ENCODE measurements at regions of chr12 and their contacts with region 1.

Region 1: GRCh38 chr12:116142936-116143898 is 134.3 kb downstream of the MED13L start:
- DNase-seq: no peak
- ATAC-seq: peak; percentile 63
- H3K4me3 ChIP-seq: no peak overlapping the region
- H3K4me3 Mint-ChIP-seq: peak overlapping the region in 7 of 10 donors; percentile 15 to 72 (median 51)
- H3K27ac ChIP-seq: no peak overlapping the region
- H3K27ac Mint-ChIP-seq: peak overlapping the region in 5 of 9 donors; percentile 1 to 45 (median 7)
- H3K4me1 ChIP-seq: peaks cover 11 to 21% of the 10 kb centered on the region in 2 donors
- H3K4me1 Mint-ChIP-seq: peaks cover 42 to 61% (median 52%) of the 10 kb centered on the region in 7 donors
- H3K27me3 ChIP-seq: no peaks in the 10 kb centered on the region
- H3K27me3 Mint-ChIP-seq: no peaks in the 10 kb centered on the region

Region 2: GRCh38 chr12:116066381-116067230 is 76.6 kb before region 1 on chr12:
- CTCF ChIA-PET with region 1: no interaction called
- POLR2A ChIA-PET with region 1: no interaction called
- intact Hi-C with region 1: loop called in 1 of 2 experiments (anchors 5 kb)
- DNase-seq: peak; percentile 18 to 58 (median 49)
- ATAC-seq: peak; percentile 87
- H3K4me3 ChIP-seq: no peak overlapping the region
- H3K4me3 Mint-ChIP-seq: peak overlapping the region in 1 of 10 donors; percentile 14
- H3K27ac ChIP-seq: no peak overlapping the region
- H3K27ac Mint-ChIP-seq: peak overlapping the region in 4 of 9 donors; percentile 3 to 80 (median 10)
- H3K4me1 ChIP-seq: no peaks in the 10 kb centered on the region
- H3K4me1 Mint-ChIP-seq: peaks cover 22 to 72% (median 55%) of the 10 kb centered on the region in 7 donors
- H3K27me3 ChIP-seq: no peaks in the 10 kb centered on the region
- H3K27me3 Mint-ChIP-seq: no peaks in the 10 kb centered on the region

Region 3: GRCh38 chr12:116116650-116117424 is 26.4 kb before region 1 on chr12:
- CTCF ChIA-PET with region 1: no interaction called
- POLR2A ChIA-PET with region 1: no interaction called
- intact Hi-C with region 1: no loop called
- DNase-seq: no peak
- ATAC-seq: no peak
- H3K4me3 ChIP-seq: no peak overlapping the region
- H3K4me3 Mint-ChIP-seq: no peak overlapping the region
- H3K27ac ChIP-seq: no peak overlapping the region
- H3K27ac Mint-ChIP-seq: no peak overlapping the region
- H3K4me1 ChIP-seq: peaks cover 0 to 15% of the 10 kb centered on the region in 2 donors
- H3K4me1 Mint-ChIP-seq: peaks cover 28 to 89% (median 56%) of the 10 kb centered on the region in 7 donors
- H3K27me3 ChIP-seq: no peaks in the 10 kb centered on the region
- H3K27me3 Mint-ChIP-seq: no peaks in the 10 kb centered on the region

Region 4: GRCh38 chr12:116687888-116688287 is 544.7 kb after region 1 on chr12:
- CTCF ChIA-PET with region 1: no interaction called
- POLR2A ChIA-PET with region 1: no interaction called
- intact Hi-C with region 1: loop called in 1 of 2 experiments (anchors 1 kb)
- DNase-seq: peak in 4 of 9 donors; percentile 10 to 20 (median 13)
- ATAC-seq: peak; percentile 76
- H3K4me3 ChIP-seq: no peak overlapping the region
- H3K4me3 Mint-ChIP-seq: no peak overlapping the region
- H3K27ac ChIP-seq: no peak overlapping the region
- H3K27ac Mint-ChIP-seq: no peak overlapping the region
- H3K4me1 ChIP-seq: no peaks in the 10 kb centered on the region
- H3K4me1 Mint-ChIP-seq: peaks cover 0 to 8% (median 3%) of the 10 kb centered on the region in 7 donors
- H3K27me3 ChIP-seq: no peaks in the 10 kb centered on the region
- H3K27me3 Mint-ChIP-seq: peaks cover 4 to 28% (median 6%) of the 10 kb centered on the region in 5 donors